Activated CD4-positive, alpha-beta T cell treated with anti-CD3 and anti-CD28 coated beads, Interleukin-2, amount 10 ng/mL, durations not matched to agents 24 days and 14 days (primary cell): ENCODE measurements at regions of chr1 and their contacts with region 1.

Region 1: GRCh38 chr1:28494737-28495136 is 11.1 kb upstream of the RCC1 start:
- DNase-seq: no peak
- H3K4me3 Mint-ChIP-seq: no peak overlapping the region
- H3K27ac Mint-ChIP-seq: peak overlapping the region; percentile 31
- H3K4me1 Mint-ChIP-seq: peaks cover 6% of the 10 kb centered on the region
- H3K27me3 Mint-ChIP-seq: no peaks in the 10 kb centered on the region

Region 2: GRCh38 chr1:28370239-28371009 is 124.3 kb before region 1 on chr1:
- intact Hi-C with region 1: no loop called
- DNase-seq: peak; percentile 75
- H3K4me3 Mint-ChIP-seq: peak overlapping the region; percentile 95
- H3K27ac Mint-ChIP-seq: peak overlapping the region; percentile 89
- H3K4me1 Mint-ChIP-seq: peaks cover 33% of the 10 kb centered on the region
- H3K27me3 Mint-ChIP-seq: no peaks in the 10 kb centered on the region

Region 3: GRCh38 chr1:28409090-28409489 is 85.6 kb before region 1 on chr1:
- intact Hi-C with region 1: loop called (anchors 5 kb)
- DNase-seq: no peak
- H3K4me3 Mint-ChIP-seq: no peak overlapping the region
- H3K27ac Mint-ChIP-seq: no peak overlapping the region
- H3K4me1 Mint-ChIP-seq: peaks cover 7% of the 10 kb centered on the region
- H3K27me3 Mint-ChIP-seq: no peaks in the 10 kb centered on the region